ENCODE measurements at regions of chr1 and their contacts with region 1.

Region 1: DNA sequence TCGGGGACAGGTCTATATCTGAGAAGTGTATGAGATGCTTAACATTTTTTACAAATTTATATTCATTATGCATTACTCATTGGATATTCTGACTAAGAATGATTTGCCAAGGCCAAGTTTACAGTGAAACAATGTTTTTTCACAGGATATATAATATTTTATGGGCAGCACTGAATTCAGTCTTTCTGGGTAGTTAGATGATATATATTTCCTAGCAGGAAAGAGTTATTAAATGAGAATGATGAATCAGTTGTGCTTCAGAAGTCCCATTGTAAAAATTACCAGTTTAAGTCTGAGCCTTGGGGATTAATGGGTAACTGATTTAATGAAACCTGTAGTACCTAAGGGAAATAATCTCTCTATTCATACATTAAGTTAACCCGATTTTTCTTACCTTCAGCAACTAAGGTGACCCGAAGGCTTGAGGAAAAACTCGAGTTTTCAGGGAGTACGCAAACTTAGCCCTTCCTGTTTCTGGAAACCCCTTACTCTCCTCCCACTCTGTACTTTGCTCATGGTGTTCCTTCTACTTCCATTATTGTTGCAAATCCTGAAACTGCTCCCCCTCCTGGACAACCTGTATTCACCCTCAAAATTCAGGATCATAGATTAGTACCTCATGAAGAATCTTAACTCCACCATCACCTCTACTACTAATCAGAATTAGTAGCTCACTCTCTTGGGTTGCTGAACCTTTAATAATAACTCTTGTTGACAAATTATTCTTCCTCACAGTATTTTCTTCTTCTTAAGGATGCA is 135.1 kb downstream of the AK5 start:
- DNase-seq: no peak
- ATAC-seq: no peak
- H3K4me3 ChIP-seq: no peak overlapping the region
- H3K4me3 Mint-ChIP-seq: no peak overlapping the region
- H3K27ac ChIP-seq: no peak overlapping the region
- H3K27ac Mint-ChIP-seq: no peak overlapping the region
- H3K4me1 ChIP-seq: peaks cover 29% of the 10 kb centered on the region
- H3K4me1 Mint-ChIP-seq: peaks cover 53% of the 10 kb centered on the region
- H3K27me3 ChIP-seq: no peaks in the 10 kb centered on the region
- H3K27me3 Mint-ChIP-seq: no peaks in the 10 kb centered on the region
- CTCF ChIP-seq: no peak

Region 2: GRCh38 chr1:77281491-77282186 is 135.2 kb before region 1 on chr1 and contains the start of gene AK5:
- CTCF ChIA-PET with region 1: no interaction called
- POLR2A ChIA-PET with region 1: interaction called, 19 read pairs
- intact Hi-C with region 1: no loop called
- DNase-seq: peak; percentile 13 to 71 (median 45)
- ATAC-seq: peak; percentile 73
- H3K4me3 ChIP-seq: peak within 1 kb of the TSS; percentile 69
- H3K4me3 Mint-ChIP-seq: peak within 1 kb of the TSS; percentile 88
- H3K27ac ChIP-seq: peak within 1 kb of the TSS in 1 of 2 donors; percentile 51
- H3K27ac Mint-ChIP-seq: peak within 1 kb of the TSS; percentile 62
- H3K4me1 ChIP-seq: peaks cover 33% of the 10 kb centered on the region
- H3K4me1 Mint-ChIP-seq: peaks cover 55% of the 10 kb centered on the region
- H3K27me3 ChIP-seq: peaks cover 0 to 11% of the 10 kb centered on the region in 2 experiments
- H3K27me3 Mint-ChIP-seq: no peaks in the 10 kb centered on the region
- CTCF ChIP-seq: no peak
- total RNA-seq, gene AK5: 32.0 TPM

Region 3: DNA sequence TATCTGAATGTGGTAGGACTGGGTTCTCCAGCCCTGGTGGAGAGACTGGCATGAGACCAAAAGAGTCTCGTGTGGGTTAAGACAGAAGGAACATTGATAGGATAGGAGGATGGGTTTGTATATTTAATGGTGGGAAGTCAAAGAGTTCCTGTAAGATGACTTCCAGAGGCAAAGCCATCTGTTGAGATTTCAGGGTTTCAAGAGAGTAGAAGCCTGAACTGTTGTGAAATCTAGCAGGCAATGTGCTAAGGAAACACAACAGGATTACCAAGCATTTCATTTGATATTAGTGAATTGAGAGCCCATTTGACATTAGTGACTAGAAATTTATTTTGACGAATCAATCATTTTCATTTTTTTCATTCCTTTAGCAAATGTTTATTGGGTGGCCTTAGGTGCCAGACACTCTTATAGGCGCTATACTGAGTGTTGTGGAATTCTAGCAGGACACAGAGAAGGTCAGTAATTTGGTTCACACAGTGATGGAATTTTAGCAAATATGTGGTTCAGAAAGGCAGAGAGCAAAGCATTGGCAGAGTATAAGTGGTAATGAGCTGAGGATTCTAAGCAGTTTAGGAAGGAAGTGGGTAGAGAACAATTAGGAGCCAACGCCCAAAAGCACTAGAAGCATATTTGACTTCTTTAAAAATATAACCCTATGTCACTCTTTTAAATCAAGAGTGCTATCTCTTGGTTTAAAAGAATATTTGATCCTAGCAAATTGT is 14.3 kb after region 1 on chr1:
- CTCF ChIA-PET with region 1: no interaction called
- POLR2A ChIA-PET with region 1: interaction called, 44 read pairs
- intact Hi-C with region 1: loop called in 1 of 2 experiments (anchors 1 kb)
- DNase-seq: peak in 4 of 14 experiments; percentile 21 to 81 (median 62)
- ATAC-seq: peak; percentile 94
- H3K4me3 ChIP-seq: peak overlapping the region; percentile 19
- H3K4me3 Mint-ChIP-seq: no peak overlapping the region
- H3K27ac ChIP-seq: peak overlapping the region; percentile 62 to 83
- H3K27ac Mint-ChIP-seq: no peak overlapping the region
- H3K4me1 ChIP-seq: peaks cover 37% of the 10 kb centered on the region
- H3K4me1 Mint-ChIP-seq: peaks cover 18% of the 10 kb centered on the region
- H3K27me3 ChIP-seq: no peaks in the 10 kb centered on the region
- H3K27me3 Mint-ChIP-seq: no peaks in the 10 kb centered on the region
- CTCF ChIP-seq: no peak

Region 4: DNA sequence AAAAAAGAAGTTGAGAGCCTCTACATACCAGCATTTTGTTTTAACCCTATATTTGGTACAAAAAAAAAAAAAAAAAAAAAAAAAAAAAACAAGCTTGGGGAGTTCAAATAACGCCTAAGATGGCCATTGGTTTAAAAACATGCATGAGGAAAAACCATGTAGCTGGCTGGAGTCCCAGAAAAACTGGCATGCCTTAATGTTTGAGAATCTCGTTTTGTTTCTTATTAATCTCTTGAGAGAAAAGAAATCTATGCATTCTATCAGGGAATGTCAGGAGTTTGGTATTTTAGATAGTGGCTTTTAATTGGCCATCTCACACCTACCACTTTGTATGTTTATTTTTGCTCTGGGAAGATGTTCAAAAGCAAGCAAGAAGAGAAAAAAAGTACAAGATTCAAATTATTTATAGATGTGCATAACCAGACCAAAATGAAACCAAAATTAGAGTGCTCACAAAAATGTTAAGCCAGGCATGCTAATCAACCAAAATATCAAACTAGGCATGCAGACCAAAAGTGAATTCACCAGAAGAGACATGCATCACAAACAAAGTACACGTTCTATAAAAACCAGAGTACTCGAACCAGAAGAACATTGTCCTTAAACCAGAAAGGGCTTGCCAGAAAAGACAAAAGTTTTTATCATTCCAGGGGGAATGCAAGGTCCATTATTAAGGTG is 21.5 kb after region 1 on chr1:
- CTCF ChIA-PET with region 1: no interaction called
- POLR2A ChIA-PET with region 1: interaction called, 10 read pairs
- intact Hi-C with region 1: no loop called
- DNase-seq: peak in 1 of 14 experiments; percentile 26
- ATAC-seq: no peak
- H3K4me3 ChIP-seq: no peak overlapping the region
- H3K4me3 Mint-ChIP-seq: peak overlapping the region; percentile 75
- H3K27ac ChIP-seq: no peak overlapping the region
- H3K27ac Mint-ChIP-seq: peak overlapping the region; percentile 74
- H3K4me1 ChIP-seq: peaks cover 7% of the 10 kb centered on the region
- H3K4me1 Mint-ChIP-seq: peaks cover 35% of the 10 kb centered on the region
- H3K27me3 ChIP-seq: no peaks in the 10 kb centered on the region
- H3K27me3 Mint-ChIP-seq: no peaks in the 10 kb centered on the region
- CTCF ChIP-seq: no peak

Region 5: DNA sequence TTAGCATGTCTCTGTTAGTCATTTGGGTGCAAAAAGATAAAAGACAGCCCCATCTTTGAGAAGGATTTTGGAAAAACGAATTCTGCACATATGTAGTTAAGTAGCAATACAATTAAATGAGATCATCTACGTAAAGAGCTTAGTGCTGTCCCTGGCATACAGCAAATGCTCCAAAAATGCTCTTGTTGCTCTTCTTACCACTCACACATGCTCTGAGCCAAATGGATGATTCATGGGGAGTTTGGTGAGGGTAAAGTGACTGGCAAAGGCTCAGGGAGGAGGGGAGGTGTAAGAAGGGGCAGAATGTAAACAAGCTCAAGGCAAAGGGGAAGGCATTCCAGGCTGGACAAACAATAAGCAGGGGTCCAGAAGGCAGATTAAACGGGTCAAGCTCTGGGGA is 56.8 kb after region 1 on chr1:
- CTCF ChIA-PET with region 1: no interaction called
- POLR2A ChIA-PET with region 1: no interaction called
- intact Hi-C with region 1: loop called in 1 of 2 experiments (anchors 5 kb)
- DNase-seq: no peak
- ATAC-seq: no peak
- H3K4me3 ChIP-seq: no peak overlapping the region
- H3K4me3 Mint-ChIP-seq: no peak overlapping the region
- H3K27ac ChIP-seq: no peak overlapping the region
- H3K27ac Mint-ChIP-seq: no peak overlapping the region
- H3K4me1 ChIP-seq: no peaks in the 10 kb centered on the region
- H3K4me1 Mint-ChIP-seq: peaks cover 22% of the 10 kb centered on the region
- H3K27me3 ChIP-seq: no peaks in the 10 kb centered on the region
- H3K27me3 Mint-ChIP-seq: no peaks in the 10 kb centered on the region
- CTCF ChIP-seq: no peak

Region 6: DNA sequence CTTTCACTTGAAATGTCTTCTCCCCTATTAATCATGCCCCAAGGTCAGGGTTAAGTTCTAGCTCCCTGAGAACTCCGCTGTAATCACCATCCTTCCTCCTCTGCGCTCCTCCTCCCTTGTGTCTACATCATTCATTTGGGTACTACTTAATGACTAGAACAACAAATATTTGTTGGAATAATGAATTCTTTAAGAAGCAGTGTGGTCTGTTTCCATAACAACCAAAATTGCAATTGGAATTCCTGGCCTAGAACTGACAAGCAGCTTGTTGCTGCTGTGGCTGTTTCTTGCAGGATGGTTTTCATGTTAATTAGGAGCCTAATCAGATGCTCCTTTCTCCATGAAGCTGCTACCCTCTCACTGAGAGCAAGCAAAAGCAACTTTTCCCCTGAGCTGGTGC is 73.0 kb after region 1 on chr1:
- CTCF ChIA-PET with region 1: no interaction called
- POLR2A ChIA-PET with region 1: no interaction called
- intact Hi-C with region 1: no loop called
- DNase-seq: no peak
- ATAC-seq: no peak
- H3K4me3 ChIP-seq: no peak overlapping the region
- H3K4me3 Mint-ChIP-seq: no peak overlapping the region
- H3K27ac ChIP-seq: no peak overlapping the region
- H3K27ac Mint-ChIP-seq: no peak overlapping the region
- H3K4me1 ChIP-seq: no peaks in the 10 kb centered on the region
- H3K4me1 Mint-ChIP-seq: no peaks in the 10 kb centered on the region
- H3K27me3 ChIP-seq: no peaks in the 10 kb centered on the region
- H3K27me3 Mint-ChIP-seq: no peaks in the 10 kb centered on the region
- CTCF ChIP-seq: no peak

Measured in CD4-positive, alpha-beta T cell (primary cell).